Cardiac septum (tissue), 1 donor: ENCODE measurements at regions of chr15 and their contacts with region 1.

Region 1: GRCh38 chr15:88299497-88299896 is 43.0 kb upstream of the NTRK3 start:
- DNase-seq: no peak

Region 2: DNA sequence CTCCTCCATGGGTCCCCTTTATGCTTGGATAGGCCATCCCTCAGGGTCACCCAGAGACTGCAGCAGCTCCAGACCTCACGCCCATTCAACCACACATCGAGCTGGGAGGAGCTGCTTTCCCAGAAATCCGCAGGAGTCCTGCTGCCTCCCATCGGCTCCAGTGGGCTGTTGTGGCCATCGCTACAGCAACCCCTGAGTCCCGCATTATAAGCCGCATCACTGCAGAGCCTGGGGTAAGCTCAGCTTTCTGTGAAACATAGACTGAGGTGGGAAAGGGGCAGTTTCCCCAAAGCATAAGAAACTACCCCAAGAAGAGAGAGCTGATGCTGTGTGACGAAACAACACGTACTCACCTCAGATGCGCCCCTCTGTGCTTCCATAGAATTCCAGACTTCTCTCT is 131.9 kb after region 1 on chr15:
- intact Hi-C with region 1: loop called (anchors 10 kb)
- DNase-seq: no peak

Region 3: DNA sequence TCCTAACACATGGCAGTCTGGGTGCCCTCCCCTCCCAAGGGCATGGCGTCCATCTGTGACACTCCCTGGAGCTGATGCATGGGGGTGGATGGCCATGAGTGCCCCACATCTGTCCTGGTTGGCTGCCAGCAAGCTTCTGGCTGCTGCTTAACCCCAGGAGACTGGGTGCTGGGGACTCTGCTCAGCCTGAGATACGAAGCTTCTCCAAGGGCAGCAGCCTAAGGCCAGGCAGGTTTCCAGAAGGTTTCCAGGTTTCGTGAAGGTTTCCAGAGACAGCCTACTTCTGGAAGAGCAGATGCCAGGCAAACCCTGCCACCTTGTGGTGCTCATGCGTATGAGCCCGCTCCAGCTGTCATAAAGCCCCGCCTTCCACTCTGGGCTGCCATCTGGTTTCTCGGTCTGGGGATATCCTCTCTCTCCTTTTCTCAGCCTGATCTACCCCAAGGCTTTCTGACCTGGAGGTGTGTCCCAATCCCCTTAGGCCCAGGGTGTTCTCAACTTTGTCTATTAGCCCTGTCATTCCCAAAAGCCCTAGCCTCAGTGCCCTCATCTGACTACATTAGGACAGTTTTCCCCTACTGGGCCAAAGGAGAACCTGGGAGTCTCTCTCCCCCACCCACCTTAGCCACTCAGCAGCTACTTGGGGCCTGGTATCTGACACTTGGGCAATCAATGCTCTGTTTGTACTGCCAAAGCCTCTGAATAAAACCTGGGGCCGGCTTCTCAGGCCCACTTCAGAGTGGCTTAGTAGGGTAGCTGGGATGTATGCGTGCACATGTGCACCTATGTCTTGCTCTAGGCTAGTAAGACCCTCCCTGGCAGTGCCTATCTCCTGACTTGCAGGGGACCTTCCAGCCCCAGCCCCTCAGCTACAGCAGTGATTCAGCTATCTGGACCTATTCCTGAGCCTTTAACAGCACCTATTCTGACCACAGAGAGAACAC is 155.6 kb after region 1 on chr15:
- intact Hi-C with region 1: no loop called
- DNase-seq: no peak